Prostate gland (tissue), 2 donors: ENCODE measurements at regions of chr15 and their contacts with region 1.

Region 1: GRCh38 chr15:29774900-29775299 is 47.4 kb downstream of the TJP1 start:
- DNase-seq: no peak
- H3K4me3 ChIP-seq: no peak overlapping the region
- H3K27ac ChIP-seq: no peak overlapping the region
- H3K4me1 ChIP-seq: no peaks in the 10 kb centered on the region
- H3K27me3 ChIP-seq: no peaks in the 10 kb centered on the region
- CTCF ChIP-seq: no peak
- POLR2A ChIP-seq: no peak

Region 2: DNA sequence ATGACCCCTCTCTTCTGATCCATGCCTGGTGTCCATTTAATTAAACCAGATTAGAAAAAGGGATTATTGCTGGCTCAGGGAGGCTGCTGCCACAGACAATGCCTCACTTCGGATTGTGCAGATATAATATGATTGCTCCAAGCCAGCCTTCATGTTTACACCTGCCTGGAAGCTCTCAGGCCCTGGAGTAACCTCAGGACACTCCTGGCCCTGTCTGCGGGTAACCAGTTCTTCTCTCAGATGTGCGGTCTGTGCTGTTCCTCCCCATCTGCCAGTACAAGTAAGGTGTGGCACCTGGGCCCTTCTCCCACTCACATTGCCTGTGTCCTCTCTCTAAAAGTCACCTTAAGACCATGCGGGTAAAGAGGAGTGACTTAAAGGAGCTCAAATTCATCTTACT is 299.0 kb after region 1 on chr15:
- intact Hi-C with region 1: loop called (anchors 10 kb)
- DNase-seq: no peak
- H3K4me3 ChIP-seq: no peak overlapping the region
- H3K27ac ChIP-seq: no peak overlapping the region
- H3K4me1 ChIP-seq: no peaks in the 10 kb centered on the region
- H3K27me3 ChIP-seq: peaks cover 2% of the 10 kb centered on the region
- CTCF ChIP-seq: no peak
- POLR2A ChIP-seq: no peak